ENCODE measurements at regions of chr11 and their contacts with region 1.

Region 1: GRCh38 chr11:111230122-111230465 is 15.4 kb upstream of the POU2AF2 start:
- DNase-seq: no peak
- H3K4me3 ChIP-seq: peak overlapping the region in 1 of 3 experiments; percentile 66
- H3K4me3 Mint-ChIP-seq: peak overlapping the region in 1 of 2 donors; percentile 72
- H3K27ac ChIP-seq: no peak overlapping the region
- H3K27ac Mint-ChIP-seq: no peak overlapping the region
- H3K4me1 ChIP-seq: peaks cover 8 to 15% of the 10 kb centered on the region in 2 donors
- H3K4me1 Mint-ChIP-seq: peaks cover 20% of the 10 kb centered on the region
- H3K27me3 ChIP-seq: no peaks in the 10 kb centered on the region
- H3K27me3 Mint-ChIP-seq: peaks cover 5 to 7% (median 7%) of the 10 kb centered on the region in 3 donors
- CTCF ChIP-seq: no peak

Region 2: DNA sequence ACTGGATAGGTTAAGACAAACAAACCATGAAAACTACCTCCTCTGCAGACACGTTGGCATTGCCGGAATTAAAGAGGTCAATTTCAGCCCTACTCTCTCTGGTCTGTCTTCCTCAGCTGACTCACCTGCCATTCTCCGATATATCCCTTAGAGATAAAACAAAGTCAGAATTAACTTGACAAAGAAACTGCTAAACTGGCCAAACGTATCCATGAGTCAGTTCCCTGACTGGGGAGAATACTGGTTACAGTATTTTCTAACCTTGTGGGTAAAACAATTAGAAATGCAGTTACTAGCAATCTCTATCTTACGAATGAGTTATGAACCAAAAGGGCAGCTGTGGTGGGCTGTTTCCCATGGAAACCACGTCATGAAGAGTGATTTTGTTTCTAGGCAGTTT is 1029.9 kb before region 1 on chr11:
- intact Hi-C with region 1: loop called in 1 of 2 experiments (anchors 10 kb)
- DNase-seq: no peak
- H3K4me3 ChIP-seq: no peak overlapping the region
- H3K4me3 Mint-ChIP-seq: no peak overlapping the region
- H3K27ac ChIP-seq: no peak overlapping the region
- H3K27ac Mint-ChIP-seq: no peak overlapping the region
- H3K4me1 ChIP-seq: no peaks in the 10 kb centered on the region
- H3K4me1 Mint-ChIP-seq: peaks cover 2% of the 10 kb centered on the region
- H3K27me3 ChIP-seq: no peaks in the 10 kb centered on the region
- H3K27me3 Mint-ChIP-seq: peaks cover 0 to 3% (median 0%) of the 10 kb centered on the region in 3 donors
- CTCF ChIP-seq: no peak

Region 3: DNA sequence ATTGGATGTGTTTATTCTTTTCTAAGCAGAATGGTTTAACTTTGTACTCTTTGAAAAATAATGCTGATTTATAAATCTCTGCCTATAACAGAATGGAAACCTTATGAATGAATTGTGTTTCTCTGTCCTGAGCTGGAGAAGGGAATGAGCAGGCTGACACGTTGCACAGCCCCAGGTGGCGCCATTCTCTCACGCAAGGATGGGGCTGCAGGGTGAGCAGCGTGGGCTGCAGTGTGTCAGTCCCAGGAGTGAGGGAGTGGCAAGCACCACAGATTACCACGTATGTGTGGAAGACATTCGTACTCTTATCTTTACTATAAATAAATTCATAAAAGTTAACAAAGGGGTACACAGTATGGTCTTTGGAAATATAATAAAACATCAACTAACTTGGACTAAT is 766.9 kb before region 1 on chr11:
- intact Hi-C with region 1: loop called (anchors 10 kb)
- DNase-seq: peak; percentile 5 to 45 (median 19)
- H3K4me3 ChIP-seq: no peak overlapping the region
- H3K4me3 Mint-ChIP-seq: no peak overlapping the region
- H3K27ac ChIP-seq: no peak overlapping the region
- H3K27ac Mint-ChIP-seq: peak overlapping the region in 1 of 7 donors; percentile 63
- H3K4me1 ChIP-seq: no peaks in the 10 kb centered on the region
- H3K4me1 Mint-ChIP-seq: no peaks in the 10 kb centered on the region
- H3K27me3 ChIP-seq: no peaks in the 10 kb centered on the region
- H3K27me3 Mint-ChIP-seq: no peaks in the 10 kb centered on the region
- CTCF ChIP-seq: peak; percentile 50

Region 4: GRCh38 chr11:110711776-110712658 is 518.1 kb before region 1 on chr11 and contains the start of gene ARHGAP20:
- intact Hi-C with region 1: loop called in 1 of 2 experiments (anchors 10 kb)
- DNase-seq: peak in 2 of 3 donors; percentile 9 to 17
- H3K4me3 ChIP-seq: peak within 1 kb of the TSS; percentile 26 to 77 (median 35)
- H3K4me3 Mint-ChIP-seq: peak within 1 kb of the TSS; percentile 76 to 97
- H3K27ac ChIP-seq: no peak within 1 kb of the TSS
- H3K27ac Mint-ChIP-seq: peak within 1 kb of the TSS in 1 of 7 donors; percentile 13
- H3K4me1 ChIP-seq: peaks cover 22 to 27% of the 10 kb centered on the region in 2 donors
- H3K4me1 Mint-ChIP-seq: peaks cover 24% of the 10 kb centered on the region
- H3K27me3 ChIP-seq: peaks cover 62 to 75% of the 10 kb centered on the region in 2 donors
- H3K27me3 Mint-ChIP-seq: peaks cover 62 to 75% (median 63%) of the 10 kb centered on the region in 3 donors
- CTCF ChIP-seq: no peak
- polyA plus RNA-seq, gene ARHGAP20: 0.04 TPM in 1 of 3 donors, not detected in the others

Measured in CD14-positive monocyte (primary cell).